GM10248 (cell line): ENCODE measurements at regions of chr1 and their contacts with region 1.

Region 1: DNA sequence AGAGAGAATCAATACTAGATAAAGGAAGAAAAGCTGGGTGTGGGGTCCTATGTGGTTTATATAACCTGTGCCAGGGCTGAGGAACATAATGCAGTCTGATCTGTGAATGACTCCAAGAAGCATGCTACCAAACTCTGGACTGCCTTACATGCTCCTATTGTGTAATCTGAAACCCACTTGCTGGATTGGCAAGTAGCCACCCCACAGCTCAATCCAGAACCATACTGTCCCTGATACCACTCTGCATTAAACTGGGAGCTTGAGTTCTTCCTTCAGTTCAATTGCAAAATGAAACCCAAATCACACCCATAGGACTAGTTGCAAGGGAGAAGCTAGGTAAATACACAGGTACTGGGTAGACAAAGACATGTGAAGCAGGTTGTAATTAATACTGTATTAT is 115.4 kb upstream of the NEGR1 start:
- DNase-seq: no peak
- CTCF ChIP-seq: no peak

Region 2: GRCh38 chr1:72218141-72218739 is 179.5 kb before region 1 on chr1:
- CTCF ChIA-PET with region 1: no interaction called
- POLR2A ChIA-PET with region 1: no interaction called
- DNase-seq: no peak
- CTCF ChIP-seq: no peak

Region 3: DNA sequence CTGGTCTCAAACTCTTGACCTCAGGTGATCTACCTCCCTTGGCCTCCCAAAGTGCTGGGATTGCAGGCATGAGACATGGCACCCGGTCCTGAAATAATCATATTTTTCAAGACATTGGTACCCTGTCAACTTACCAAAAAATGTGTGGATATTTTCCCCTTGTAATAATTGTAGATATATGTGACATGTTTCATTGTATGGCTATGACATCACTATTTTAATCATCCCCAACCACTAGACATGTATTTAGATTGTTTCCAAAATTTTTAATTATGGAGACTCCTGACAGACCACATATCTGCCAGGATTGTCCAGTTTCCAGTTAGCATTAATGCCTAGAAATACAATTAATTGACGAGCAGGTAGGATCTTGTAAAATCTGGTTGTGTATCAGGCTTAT is 18.7 kb before region 1 on chr1:
- CTCF ChIA-PET with region 1: interaction called, 10 read pairs
- POLR2A ChIA-PET with region 1: no interaction called
- DNase-seq: no peak
- CTCF ChIP-seq: no peak